A673 (cell line): ENCODE measurements at regions of chr3 and their contacts with region 1.

Region 1: GRCh38 chr3:146326670-146327543 is 76.0 kb upstream of the PLSCR4 start:
- DNase-seq: peak; percentile 68
- H3K4me3 ChIP-seq: no peak overlapping the region
- H3K27ac ChIP-seq: no peak overlapping the region
- H3K4me1 ChIP-seq: no peaks in the 10 kb centered on the region
- H3K27me3 ChIP-seq: no peaks in the 10 kb centered on the region
- CTCF ChIP-seq: peak; percentile 74

Region 2: DNA sequence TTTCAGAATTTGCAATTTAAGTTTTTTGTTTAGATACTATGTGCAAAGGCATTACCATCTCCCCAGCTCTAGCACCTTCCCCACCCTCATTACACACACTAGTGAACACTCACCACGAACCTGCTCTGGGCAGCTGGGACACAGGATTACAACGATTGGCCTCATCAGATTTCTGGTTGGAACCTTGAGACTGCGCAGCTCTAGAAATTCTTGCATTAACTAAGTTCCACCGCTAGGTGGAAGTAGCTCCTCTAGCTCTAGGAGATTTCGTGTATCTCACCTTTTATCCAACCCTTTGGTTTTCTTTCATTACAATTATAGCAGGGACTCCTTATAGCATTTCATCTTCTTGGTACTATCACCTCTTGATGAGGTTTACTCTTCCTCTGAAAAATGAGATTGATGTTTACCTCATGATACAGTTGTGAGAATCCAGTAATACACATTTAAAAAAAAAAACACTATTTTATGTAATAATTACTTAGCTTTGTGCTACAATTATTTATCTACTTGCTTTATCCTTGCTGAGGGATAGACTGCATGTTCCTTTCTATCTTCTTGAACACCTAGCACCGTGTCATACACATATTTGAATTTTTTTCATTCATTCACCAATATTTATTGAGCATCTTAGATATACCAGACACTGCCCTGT is 137.3 kb before region 1 on chr3:
- CTCF ChIA-PET with region 1: interaction called, 42 read pairs
- POLR2A ChIA-PET with region 1: no interaction called
- intact Hi-C with region 1: loop called (anchors 1 kb)
- DNase-seq: peak; percentile 71
- H3K4me3 ChIP-seq: no peak overlapping the region
- H3K27ac ChIP-seq: no peak overlapping the region
- H3K4me1 ChIP-seq: peaks cover under 1% of the 10 kb centered on the region
- H3K27me3 ChIP-seq: no peaks in the 10 kb centered on the region
- CTCF ChIP-seq: peak; percentile 75

Region 3: GRCh38 chr3:146218880-146219866 is 107.7 kb before region 1 on chr3:
- CTCF ChIA-PET with region 1: interaction called, 4 read pairs
- POLR2A ChIA-PET with region 1: no interaction called
- intact Hi-C with region 1: loop called (anchors 1 kb)
- DNase-seq: peak; percentile 47
- H3K4me3 ChIP-seq: no peak overlapping the region
- H3K27ac ChIP-seq: no peak overlapping the region
- H3K4me1 ChIP-seq: no peaks in the 10 kb centered on the region
- H3K27me3 ChIP-seq: no peaks in the 10 kb centered on the region
- CTCF ChIP-seq: peak; percentile 80

Region 4: DNA sequence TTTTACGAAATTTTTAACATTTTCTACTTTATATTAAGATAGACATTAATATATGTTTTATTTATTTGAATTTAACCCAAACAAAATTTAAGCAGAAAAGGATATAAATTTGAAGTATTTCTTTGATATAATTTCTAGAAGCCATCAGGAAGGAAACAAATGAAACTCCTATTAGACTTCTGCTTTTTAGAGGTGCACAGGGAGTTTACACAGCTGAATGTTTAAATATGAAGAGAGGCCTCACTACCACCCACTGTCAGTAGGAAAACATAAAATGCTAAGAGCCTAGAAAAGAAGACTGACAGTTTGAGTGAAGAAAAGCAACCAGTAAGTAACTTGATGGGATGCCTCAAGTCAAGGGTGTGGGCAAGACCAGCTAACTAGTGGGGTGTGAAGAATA is 122.7 kb after region 1 on chr3:
- CTCF ChIA-PET with region 1: no interaction called
- POLR2A ChIA-PET with region 1: no interaction called
- intact Hi-C with region 1: no loop called
- DNase-seq: no peak
- H3K4me3 ChIP-seq: no peak overlapping the region
- H3K27ac ChIP-seq: no peak overlapping the region
- H3K4me1 ChIP-seq: peaks cover 4% of the 10 kb centered on the region
- H3K27me3 ChIP-seq: no peaks in the 10 kb centered on the region
- CTCF ChIP-seq: no peak